ENCODE measurements at regions of chr17 and their contacts with region 1.

Region 1: DNA sequence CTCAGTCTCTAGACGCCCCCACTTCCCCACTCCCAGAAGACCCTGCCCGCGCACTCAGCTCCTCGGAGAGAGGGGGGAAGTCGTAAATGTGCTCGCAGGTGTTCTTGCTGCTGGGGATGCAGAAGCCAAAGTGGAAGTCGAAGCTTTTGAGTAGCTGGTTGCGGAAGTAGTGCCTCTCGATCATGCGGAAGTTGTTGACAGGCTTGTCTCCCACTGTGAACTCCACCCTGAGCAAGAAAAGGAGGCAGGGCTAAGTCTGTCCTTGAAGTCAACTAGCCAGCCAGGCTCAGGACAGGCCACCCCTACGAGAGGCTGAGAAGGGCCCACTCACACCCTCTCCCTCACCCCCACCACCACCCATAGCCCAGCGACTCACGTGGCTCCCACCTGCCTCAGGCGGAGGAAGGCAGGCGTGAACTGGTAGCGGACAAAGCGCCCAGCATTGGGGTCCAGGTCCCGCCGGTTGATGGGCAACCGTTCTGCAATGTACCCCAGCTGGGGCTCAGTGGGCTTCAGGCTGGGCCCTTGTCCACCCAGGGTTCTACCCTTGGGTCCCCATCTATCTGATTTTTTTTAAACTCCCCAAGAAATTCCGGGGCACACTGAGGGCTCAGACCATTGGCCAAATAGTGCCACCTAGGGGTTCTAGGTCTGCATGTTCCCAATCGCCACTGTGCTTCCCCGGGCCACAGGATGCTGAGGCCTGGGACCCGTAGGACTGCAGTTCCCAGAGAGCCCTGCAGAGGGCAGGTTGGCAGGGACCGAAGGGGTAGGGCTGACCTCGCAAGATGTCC is 4.6 kb downstream of the UNC119 start:
- DNase-seq: peak; percentile 89
- CTCF ChIP-seq: peak; percentile 82

Region 2: GRCh38 chr17:27915709-27916108 is 632.1 kb before region 1 on chr17:
- in situ Hi-C with region 1: no loop called
- DNase-seq: no peak
- CTCF ChIP-seq: no peak

Region 3: DNA sequence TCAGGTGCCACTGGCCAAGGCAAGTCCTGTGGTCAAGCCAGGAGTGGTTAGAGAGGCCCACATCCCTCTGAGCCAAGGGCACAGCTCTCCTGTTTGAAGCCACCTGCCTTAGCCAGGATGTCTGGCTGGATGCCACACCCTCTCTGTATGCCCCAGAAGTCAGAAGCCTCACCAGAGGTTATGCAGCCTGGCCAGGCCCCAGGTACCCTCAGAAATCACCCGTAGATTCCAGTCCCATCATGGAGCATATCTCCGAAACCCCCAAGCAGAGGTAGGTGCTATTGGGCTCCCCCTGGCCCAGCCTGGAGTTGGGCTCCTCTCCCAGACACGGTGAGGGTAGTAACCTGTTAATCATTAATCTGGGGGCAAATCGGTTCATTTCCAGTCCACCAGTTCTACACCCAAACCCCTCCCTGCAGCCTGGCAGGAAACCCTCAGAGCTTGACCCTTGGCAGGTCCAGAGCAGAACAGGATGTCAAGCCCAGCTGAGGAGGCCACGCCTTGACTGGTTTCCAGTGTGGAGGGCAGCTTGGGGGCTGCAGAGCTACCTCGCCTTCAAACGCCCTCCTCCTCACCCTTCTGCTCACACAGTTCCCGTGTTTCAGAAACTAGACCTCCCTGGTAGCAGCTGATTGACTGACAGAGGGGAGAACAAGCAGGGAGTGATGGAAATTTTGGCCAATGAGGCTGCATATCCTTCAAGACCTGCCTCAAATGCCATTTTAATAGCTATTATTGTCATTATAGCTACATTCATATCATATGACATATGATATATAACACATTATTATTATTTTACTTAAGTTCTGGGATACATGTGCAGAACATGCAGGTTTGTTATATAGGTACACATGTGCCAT is 289.2 kb before region 1 on chr17:
- in situ Hi-C with region 1: no loop called
- DNase-seq: no peak
- CTCF ChIP-seq: no peak

Region 4: DNA sequence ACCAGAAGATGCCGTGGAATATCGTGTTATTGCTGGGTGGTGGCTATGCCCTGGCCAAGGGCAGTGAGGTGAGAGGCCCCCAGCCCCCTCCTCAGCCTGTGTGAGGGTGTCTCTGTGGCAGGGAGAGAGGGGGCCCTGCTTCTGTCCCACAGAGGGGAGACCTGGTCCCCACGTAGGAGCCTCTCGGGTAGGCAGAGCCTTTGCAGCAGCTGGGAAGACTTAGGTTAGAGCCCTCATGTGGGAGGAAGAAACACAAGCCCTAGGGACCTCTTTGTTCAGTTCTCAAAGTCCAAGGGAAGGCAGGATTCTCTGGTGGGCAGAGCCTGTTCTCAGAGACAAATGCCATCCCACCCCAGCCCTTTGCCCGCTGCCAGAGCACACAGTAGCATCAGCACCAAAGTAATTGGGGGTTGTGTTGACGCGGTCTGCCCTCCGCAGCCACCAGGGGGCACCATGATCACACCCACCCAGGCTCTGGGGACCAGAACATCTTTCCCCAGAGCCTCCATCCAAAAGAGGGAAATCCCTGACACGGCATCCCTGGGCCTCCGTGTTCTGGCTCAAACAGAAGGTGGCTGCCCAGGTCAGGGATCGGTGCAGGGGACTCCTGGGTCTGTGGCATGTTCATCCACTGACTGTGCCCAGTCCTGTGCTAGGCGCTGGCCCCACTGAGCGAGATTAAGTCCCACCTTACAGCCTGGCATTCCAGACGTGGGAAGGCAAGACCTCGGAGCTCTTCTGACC is 53.2 kb before region 1 on chr17:
- in situ Hi-C with region 1: loop called (anchors 10 kb)
- DNase-seq: peak; percentile 92
- CTCF ChIP-seq: peak; percentile 96

Region 5: GRCh38 chr17:29568331-29569244 is 1020.8 kb after region 1 on chr17 and contains the start of gene TP53I13:
- in situ Hi-C with region 1: no loop called
- DNase-seq: peak; percentile 92
- CTCF ChIP-seq: no peak

Measured in GM13976 (cell line).